Endothelial cell of umbilical vein (primary cell): ENCODE measurements at regions of chr1 and their contacts with region 1.

Region 1: DNA sequence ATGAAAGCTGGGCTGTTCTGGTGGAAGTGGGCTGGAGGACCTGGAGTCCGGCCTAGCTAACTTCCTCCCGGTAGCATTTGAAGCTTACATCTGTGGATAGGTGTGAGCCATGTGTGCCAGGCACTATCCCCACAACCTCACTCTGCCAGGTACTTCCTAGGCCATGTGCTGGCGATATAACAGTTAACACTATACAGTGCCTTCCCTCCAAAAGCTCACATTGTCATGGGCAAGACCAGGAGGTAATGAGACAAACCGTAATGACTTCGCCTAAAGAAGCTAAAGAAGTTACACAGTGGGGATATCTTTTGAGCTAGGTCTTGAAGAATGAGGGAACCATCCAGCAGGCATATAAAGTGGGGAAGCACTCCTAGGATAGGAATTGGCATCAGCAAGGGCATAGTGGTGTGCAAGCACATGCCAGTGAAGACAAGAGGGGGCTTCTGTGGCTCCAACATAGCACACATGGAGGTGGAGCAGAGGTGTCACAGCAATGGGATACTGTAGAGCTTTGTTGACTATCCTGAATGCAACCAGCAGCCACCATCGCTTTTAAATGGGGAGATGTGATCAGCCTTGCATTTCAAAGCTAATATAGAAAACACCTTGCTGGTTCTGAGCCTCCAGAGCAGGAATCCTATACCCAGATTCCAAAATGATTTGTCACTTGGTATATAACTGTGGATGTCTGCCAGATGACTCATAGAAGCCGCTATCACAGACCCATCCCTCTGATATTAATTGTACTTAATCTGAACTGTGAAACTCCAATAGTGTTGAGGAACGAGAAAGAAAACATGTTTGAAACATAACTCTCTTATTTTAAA is 466.3 kb downstream of the LMO4 start:
- DNase-seq: peak; percentile 62
- H3K4me3 ChIP-seq: no peak overlapping the region
- H3K27ac ChIP-seq: no peak overlapping the region
- H3K4me1 ChIP-seq: peaks cover 10% of the 10 kb centered on the region
- H3K27me3 ChIP-seq: no peaks in the 10 kb centered on the region
- CTCF ChIP-seq: no peak
- POLR2A ChIP-seq: no peak

Region 2: GRCh38 chr1:87684194-87684593 is 110.8 kb before region 1 on chr1:
- CTCF ChIA-PET with region 1: no interaction called
- POLR2A ChIA-PET with region 1: no interaction called
- dilution Hi-C with region 1: no loop called
- intact Hi-C with region 1: loop called (anchors 5 kb)
- DNase-seq: peak; percentile 55
- H3K4me3 ChIP-seq: peak overlapping the region; percentile 36 to 74 (median 42)
- H3K27ac ChIP-seq: peak overlapping the region; percentile 6
- H3K4me1 ChIP-seq: peaks cover 23% of the 10 kb centered on the region
- H3K27me3 ChIP-seq: no peaks in the 10 kb centered on the region
- CTCF ChIP-seq: no peak
- POLR2A ChIP-seq: no peak

Region 3: DNA sequence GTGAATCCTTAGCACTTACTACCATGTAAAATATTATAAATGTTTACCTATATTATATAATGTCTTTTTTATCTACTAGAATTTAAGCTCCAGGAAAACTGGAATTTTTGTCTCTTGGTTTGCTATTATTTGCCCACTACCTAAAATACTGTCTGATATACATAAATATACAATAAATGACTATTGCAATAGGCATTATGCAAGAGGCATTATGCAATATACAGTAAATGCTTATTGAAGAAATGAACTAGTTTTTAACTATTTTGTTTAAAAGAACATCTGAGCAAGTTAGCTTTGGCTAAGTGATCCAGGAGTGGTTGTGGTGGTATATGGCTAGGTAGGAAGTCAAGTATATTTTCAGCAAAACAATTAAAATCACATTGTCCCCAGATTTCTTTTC is 248.8 kb after region 1 on chr1:
- CTCF ChIA-PET with region 1: no interaction called
- POLR2A ChIA-PET with region 1: no interaction called
- dilution Hi-C with region 1: no loop called
- intact Hi-C with region 1: no loop called
- DNase-seq: no peak
- H3K4me3 ChIP-seq: no peak overlapping the region
- H3K27ac ChIP-seq: no peak overlapping the region
- H3K4me1 ChIP-seq: peaks cover 3% of the 10 kb centered on the region
- H3K27me3 ChIP-seq: no peaks in the 10 kb centered on the region
- CTCF ChIP-seq: no peak
- POLR2A ChIP-seq: no peak

Region 4: GRCh38 chr1:88061492-88062177 is 266.6 kb after region 1 on chr1:
- CTCF ChIA-PET with region 1: no interaction called
- POLR2A ChIA-PET with region 1: no interaction called
- dilution Hi-C with region 1: no loop called
- intact Hi-C with region 1: loop called (anchors 10 kb)
- DNase-seq: peak; percentile 59
- H3K4me3 ChIP-seq: no peak overlapping the region
- H3K27ac ChIP-seq: no peak overlapping the region
- H3K4me1 ChIP-seq: peaks cover 6% of the 10 kb centered on the region
- H3K27me3 ChIP-seq: no peaks in the 10 kb centered on the region
- CTCF ChIP-seq: peak; percentile 65 to 67
- POLR2A ChIP-seq: no peak